AG04449 (cell line): ENCODE measurements at regions of chr16 and their contacts with region 1.

Region 1: DNA sequence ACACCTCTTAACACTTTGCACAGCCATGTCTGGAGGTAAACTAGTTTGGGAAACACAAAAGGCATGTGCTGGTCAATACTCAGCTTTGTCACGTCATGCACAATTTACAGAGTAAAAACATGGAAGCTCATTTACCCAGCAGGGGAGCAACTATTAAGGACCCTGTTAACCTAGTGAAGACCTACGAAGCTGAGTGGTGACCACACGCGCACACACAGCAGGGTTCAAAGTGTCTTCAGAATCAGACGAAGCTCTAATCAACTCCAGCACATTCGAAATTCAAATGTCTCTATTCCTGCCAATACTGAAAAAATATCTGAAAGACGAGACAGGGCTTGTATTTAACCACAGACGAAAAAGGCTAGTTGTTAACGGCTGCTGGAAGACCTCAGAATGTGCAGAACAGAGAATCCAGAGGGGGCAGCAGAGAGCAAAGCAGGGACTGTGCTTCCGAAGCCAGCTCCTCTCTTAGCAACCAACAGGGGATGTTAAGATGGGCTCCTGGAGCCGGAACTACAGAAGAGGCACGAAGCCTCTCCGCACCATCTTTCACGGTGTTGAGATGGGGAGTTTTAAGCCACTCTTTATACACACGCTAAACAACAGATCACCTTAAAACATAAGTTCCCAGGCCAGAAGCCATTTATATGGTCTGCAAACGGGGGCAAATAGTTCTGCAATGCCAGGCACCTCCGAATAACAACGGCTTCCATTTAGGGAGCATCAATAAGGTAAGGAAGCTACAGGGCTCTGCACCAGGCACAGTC is 45.7 kb downstream of the CMTM4 start:
- DNase-seq: peak; percentile 12
- H3K4me3 ChIP-seq: peak overlapping the region; percentile 0; the same call in 1 of the 2 replicates
- CTCF ChIP-seq: peak; percentile 90

Region 2: GRCh38 chr16:66639091-66639885 is 11.6 kb before region 1 on chr16:
- CTCF ChIA-PET with region 1: interaction called, 166 read pairs
- POLR2A ChIA-PET with region 1: no interaction called
- DNase-seq: no peak
- H3K4me3 ChIP-seq: no peak overlapping the region
- CTCF ChIP-seq: no peak

Region 3: DNA sequence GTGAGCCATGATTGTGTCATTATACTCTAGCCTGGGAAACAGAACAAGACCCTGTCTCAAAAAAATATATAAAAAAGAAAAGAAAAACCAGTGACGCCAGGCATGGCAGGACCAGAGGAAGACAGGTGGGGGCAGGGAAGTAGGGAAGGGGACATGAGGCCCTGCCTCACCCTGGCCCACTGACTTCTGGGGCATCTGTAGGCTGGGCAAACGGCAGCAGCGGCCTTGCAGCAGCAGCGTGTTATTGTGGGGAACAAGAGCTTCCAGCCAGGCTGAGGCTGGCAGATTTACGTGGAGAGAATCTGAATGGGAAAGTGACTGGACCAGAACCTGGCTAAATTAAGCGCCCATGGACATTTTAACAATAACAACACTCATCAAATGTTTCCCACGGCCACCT is 26.3 kb after region 1 on chr16:
- CTCF ChIA-PET with region 1: interaction called, 25 read pairs
- POLR2A ChIA-PET with region 1: no interaction called
- DNase-seq: no peak
- H3K4me3 ChIP-seq: no peak overlapping the region
- CTCF ChIP-seq: no peak

Region 4: GRCh38 chr16:66728117-66728787 is 77.4 kb after region 1 on chr16:
- CTCF ChIA-PET with region 1: interaction called, 38 read pairs
- POLR2A ChIA-PET with region 1: no interaction called
- DNase-seq: no peak
- H3K4me3 ChIP-seq: no peak overlapping the region
- CTCF ChIP-seq: peak; percentile 51